ENCODE measurements at regions of chr4 and their contacts with region 1.

Region 1: GRCh38 chr4:183840311-183840710 is 64.8 kb upstream of the STOX2 start:
- DNase-seq: peak; percentile 87
- ATAC-seq: peak; percentile 64

Region 2: DNA sequence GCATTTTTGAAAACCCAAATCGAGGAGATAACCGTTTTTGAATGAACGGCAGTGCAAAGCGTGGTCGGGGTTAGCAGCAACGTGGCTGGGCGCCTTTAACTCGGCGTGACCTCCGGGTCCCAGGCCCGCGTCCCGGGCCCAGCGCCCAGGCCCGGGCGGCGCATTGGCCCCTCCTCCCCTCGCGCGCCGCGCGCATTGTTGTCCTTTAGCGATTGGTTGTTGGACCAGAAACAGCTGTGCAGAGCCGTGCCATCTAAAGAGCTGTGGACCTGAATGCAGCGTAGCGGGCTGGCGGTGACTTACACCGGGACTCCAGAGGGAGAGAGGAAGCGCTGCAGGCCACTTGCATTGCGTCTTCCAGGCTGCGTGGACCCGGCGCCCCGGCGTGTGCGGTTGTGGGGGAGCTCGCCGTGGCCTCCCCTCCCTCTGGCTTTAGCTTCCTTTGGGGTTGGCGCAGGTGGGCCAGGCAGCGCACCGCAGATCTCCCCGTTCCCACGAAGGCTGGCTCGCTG is 64.8 kb after region 1 on chr4 and contains the start of gene STOX2:
- intact Hi-C with region 1: loop called (anchors 10 kb)
- DNase-seq: peak; percentile 92
- ATAC-seq: peak; percentile 94
- total RNA-seq, gene STOX2: 10.6 TPM

Region 3: DNA sequence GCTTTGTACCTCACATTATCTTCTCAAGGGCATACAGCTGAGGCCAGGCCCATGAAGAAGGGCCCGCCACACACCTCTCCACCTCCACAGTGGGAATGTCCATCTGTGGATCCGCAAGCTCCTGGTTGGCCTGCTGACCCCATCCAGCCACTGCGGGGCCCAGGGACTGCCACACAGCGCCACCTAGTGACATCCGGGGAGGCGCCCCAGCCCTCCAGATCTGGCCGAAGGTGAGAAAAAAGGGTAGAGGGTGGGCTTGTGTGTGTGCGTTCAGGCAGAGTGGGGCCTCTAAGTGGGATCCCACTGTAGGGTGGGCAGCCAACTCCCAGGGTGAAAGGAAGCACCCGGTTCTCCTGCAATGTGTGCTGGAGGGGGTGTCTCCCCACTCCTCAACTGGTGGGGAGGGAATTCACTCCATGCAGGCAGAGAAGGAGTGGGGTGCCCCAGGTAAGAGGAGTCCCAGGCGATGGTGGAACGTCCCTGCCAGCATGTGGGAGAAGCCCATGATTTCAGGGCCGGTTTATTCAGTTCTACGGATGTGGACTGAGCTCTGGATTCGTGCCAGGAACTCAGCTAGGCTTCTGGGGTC is 260.1 kb after region 1 on chr4:
- intact Hi-C with region 1: loop called (anchors 5 kb)
- DNase-seq: peak; percentile 81
- ATAC-seq: peak; percentile 84

Region 4: GRCh38 chr4:184168406-184169019 is 328.2 kb after region 1 on chr4:
- intact Hi-C with region 1: loop called (anchors 2 kb)
- DNase-seq: peak; percentile 88
- ATAC-seq: peak; percentile 98

Measured in left ventricle myocardium superior (tissue), 1 donor.